MCF 10A (cell line): ENCODE measurements at regions of chr2 and their contacts with region 1.

Region 1: DNA sequence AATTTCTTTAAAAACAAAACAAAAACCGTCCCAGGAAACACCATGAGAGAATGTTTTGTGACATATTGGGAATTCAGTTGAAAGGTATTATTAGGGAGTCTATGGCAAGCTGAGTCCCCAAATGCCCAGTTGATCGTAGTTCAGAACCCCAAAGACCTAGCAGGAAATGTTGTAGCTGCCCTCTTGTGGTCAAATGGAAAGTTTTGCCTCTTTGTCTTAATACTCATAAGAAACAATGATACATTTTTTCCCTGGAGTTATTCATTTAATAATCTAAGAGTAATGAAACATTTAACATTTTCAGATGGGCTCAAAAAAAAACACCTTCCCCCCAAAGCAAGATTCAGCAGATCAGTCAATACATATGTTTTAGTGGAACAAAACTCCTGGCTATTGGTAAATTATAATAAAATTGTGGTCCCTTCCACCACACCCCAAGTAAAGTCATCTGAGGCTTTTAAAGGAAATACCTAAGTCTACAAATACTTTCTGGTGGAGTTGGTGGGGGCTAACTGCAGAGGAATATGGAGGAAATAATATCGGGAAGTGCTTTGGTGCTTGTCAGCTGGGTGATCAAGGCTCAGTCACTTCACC is 37.8 kb upstream of the EFEMP1 start:
- DNase-seq: peak; percentile 74
- H3K4me3 Mint-ChIP-seq: no peak overlapping the region
- H3K27ac Mint-ChIP-seq: peak overlapping the region; percentile 25
- H3K4me1 Mint-ChIP-seq: peaks cover 29% of the 10 kb centered on the region
- H3K27me3 Mint-ChIP-seq: no peaks in the 10 kb centered on the region
- CTCF ChIP-seq: peak; percentile 43

Region 2: GRCh38 chr2:55779459-55780421 is 181.7 kb before region 1 on chr2:
- CTCF ChIA-PET with region 1: interaction called, 10 read pairs
- POLR2A ChIA-PET with region 1: interaction called, 6 read pairs
- intact Hi-C with region 1: loop called (anchors 1 kb)
- DNase-seq: peak; percentile 90
- H3K4me3 Mint-ChIP-seq: peak overlapping the region; percentile 41
- H3K27ac Mint-ChIP-seq: peak overlapping the region; percentile 97
- H3K4me1 Mint-ChIP-seq: peaks cover 36% of the 10 kb centered on the region
- H3K27me3 Mint-ChIP-seq: no peaks in the 10 kb centered on the region
- CTCF ChIP-seq: no peak

Region 3: DNA sequence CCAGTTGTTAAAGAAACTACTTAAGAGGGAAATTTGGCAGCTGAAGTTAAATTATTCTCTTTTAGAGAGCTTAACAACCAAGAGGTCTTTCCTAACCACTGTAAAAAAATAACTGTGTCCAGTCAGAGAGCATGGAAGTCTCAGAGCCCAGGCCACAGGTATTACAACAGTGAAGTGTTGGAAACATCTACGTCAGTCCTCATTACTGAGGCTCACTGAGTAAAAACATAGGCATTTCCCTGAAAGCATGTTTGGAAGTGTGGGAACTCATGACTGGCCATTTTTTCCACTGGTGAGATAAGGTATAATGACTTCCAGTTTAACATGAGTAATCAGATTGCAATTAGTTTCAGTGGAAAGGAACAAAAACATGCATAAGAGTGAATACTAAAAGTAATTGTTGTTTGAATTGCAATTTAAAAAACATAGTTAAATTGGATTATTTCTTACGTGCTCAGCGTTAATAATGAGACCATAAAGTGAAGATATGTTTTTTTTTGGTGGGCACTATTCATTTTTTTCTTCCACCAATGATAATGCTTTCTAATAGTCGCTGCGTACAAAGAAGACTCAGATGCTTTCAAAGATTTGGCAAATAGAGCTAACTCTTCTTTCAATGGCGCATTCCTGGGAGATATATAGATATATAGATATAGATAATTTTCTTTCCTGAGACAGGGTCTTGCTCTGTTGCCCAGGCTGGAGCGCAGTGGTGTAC is 98.6 kb before region 1 on chr2:
- CTCF ChIA-PET with region 1: interaction called, 6 read pairs
- POLR2A ChIA-PET with region 1: interaction called, 10 read pairs
- intact Hi-C with region 1: loop called (anchors 1 kb)
- DNase-seq: peak; percentile 98
- H3K4me3 Mint-ChIP-seq: peak overlapping the region; percentile 47
- H3K27ac Mint-ChIP-seq: peak overlapping the region; percentile 93
- H3K4me1 Mint-ChIP-seq: peaks cover 26% of the 10 kb centered on the region
- H3K27me3 Mint-ChIP-seq: no peaks in the 10 kb centered on the region
- CTCF ChIP-seq: no peak

Region 4: GRCh38 chr2:55885129-55885943 is 76.1 kb before region 1 on chr2:
- CTCF ChIA-PET with region 1: interaction called, 14 read pairs
- POLR2A ChIA-PET with region 1: interaction called, 7 read pairs
- intact Hi-C with region 1: no loop called
- DNase-seq: peak; percentile 91
- H3K4me3 Mint-ChIP-seq: no peak overlapping the region
- H3K27ac Mint-ChIP-seq: peak overlapping the region; percentile 97
- H3K4me1 Mint-ChIP-seq: peaks cover 64% of the 10 kb centered on the region
- H3K27me3 Mint-ChIP-seq: no peaks in the 10 kb centered on the region
- CTCF ChIP-seq: no peak

Region 5: DNA sequence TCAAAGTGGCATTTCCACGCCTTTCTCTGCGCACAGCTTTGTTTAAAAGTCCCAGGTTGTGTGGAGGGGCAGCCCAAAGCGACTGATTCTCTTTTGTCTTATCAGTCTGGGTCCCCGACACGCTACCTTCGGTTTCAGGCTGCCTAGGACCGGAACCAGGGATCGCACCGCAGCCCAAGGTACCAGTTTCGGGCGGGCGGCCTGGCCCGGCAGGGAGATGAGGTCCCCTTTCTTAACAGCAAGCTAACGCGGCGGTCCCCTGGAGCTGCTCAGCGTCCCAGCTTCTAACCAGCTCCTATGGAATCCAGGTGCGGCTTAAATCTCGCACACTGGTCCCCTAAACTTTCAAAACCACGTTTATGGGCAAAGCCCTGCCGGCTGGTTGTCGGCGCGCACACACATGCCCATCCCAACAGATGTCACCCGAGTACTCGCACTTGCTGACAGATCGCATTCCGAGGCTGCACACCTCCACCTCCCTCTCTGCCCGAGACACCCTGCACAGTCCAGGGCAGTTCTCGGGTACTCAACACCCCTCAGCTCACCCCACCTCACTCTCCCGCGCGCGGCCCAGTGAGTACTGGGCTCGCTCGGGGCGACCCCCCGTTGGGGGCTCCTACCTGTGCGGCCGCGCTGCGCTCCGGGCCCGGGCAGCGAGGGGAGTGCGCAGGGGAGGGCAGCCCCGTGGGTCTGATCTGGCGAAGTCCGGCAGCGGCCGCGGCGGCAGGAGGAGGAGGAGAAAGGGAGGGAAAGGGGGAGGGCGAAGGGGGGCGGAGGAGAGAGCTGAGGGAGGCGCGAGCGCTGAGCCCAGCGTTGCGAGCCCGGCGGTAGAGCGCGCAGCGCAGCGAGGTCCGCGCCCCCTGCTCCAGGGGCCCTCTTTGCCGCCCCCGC is 38.1 kb before region 1 on chr2 and contains the start of gene EFEMP1:
- CTCF ChIA-PET with region 1: interaction called, 45 read pairs
- POLR2A ChIA-PET with region 1: interaction called, 62 read pairs
- intact Hi-C with region 1: loop called (anchors 1 kb)
- DNase-seq: peak; percentile 83
- H3K4me3 Mint-ChIP-seq: peak within 1 kb of the TSS; percentile 87
- H3K27ac Mint-ChIP-seq: peak within 1 kb of the TSS; percentile 87
- H3K4me1 Mint-ChIP-seq: peaks cover 10% of the 10 kb centered on the region
- H3K27me3 Mint-ChIP-seq: no peaks in the 10 kb centered on the region
- CTCF ChIP-seq: no peak
- total RNA-seq, gene EFEMP1: 125 and 163 TPM in 2 replicates

Region 6: GRCh38 chr2:56021579-56021978 is 60.2 kb after region 1 on chr2:
- CTCF ChIA-PET with region 1: no interaction called
- POLR2A ChIA-PET with region 1: no interaction called
- intact Hi-C with region 1: no loop called
- DNase-seq: no peak
- H3K4me3 Mint-ChIP-seq: no peak overlapping the region
- H3K27ac Mint-ChIP-seq: no peak overlapping the region
- H3K4me1 Mint-ChIP-seq: no peaks in the 10 kb centered on the region
- H3K27me3 Mint-ChIP-seq: no peaks in the 10 kb centered on the region
- CTCF ChIP-seq: no peak

Region 7: GRCh38 chr2:56230171-56230570 is 268.8 kb after region 1 on chr2:
- CTCF ChIA-PET with region 1: no interaction called
- POLR2A ChIA-PET with region 1: no interaction called
- intact Hi-C with region 1: no loop called
- DNase-seq: peak; percentile 55
- H3K4me3 Mint-ChIP-seq: peak overlapping the region; percentile 8
- H3K27ac Mint-ChIP-seq: peak overlapping the region; percentile 85
- H3K4me1 Mint-ChIP-seq: peaks cover 29% of the 10 kb centered on the region
- H3K27me3 Mint-ChIP-seq: no peaks in the 10 kb centered on the region
- CTCF ChIP-seq: no peak